Naive thymus-derived CD8-positive, alpha-beta T cell (primary cell): ENCODE measurements at regions of chr19 and their contacts with region 1.

Region 1: GRCh38 chr19:2475702-2476450 is at the start of gene GADD45B:
- DNase-seq: peak; percentile 92 to 99 (median 98)
- ATAC-seq: peak; percentile 53 to 62
- H3K4me3 Mint-ChIP-seq: peak within 1 kb of the TSS; percentile 95 to 100 (median 98)
- H3K27ac Mint-ChIP-seq: peak within 1 kb of the TSS; percentile 94 to 99 (median 94)
- H3K4me1 Mint-ChIP-seq: peaks cover 9 to 36% (median 27%) of the 10 kb centered on the region in 4 donors
- H3K27me3 Mint-ChIP-seq: peaks cover 0 to 5% (median 0%) of the 10 kb centered on the region in 5 donors
- polyA plus RNA-seq, gene GADD45B: 41.0 to 57.3 (median 43.8) TPM

Region 2: GRCh38 chr19:2261438-2262172 is 214.3 kb before region 1 on chr19:
- POLR2A ChIA-PET with region 1: interaction called, 10 read pairs
- DNase-seq: peak in 3 of 10 donors; percentile 41 to 52 (median 47)
- ATAC-seq: no peak
- H3K4me3 Mint-ChIP-seq: peak overlapping the region in 1 of 10 donors; percentile 57
- H3K27ac Mint-ChIP-seq: peak overlapping the region in 6 of 10 donors; percentile 16 to 85 (median 65)
- H3K4me1 Mint-ChIP-seq: peaks cover 3 to 51% (median 23%) of the 10 kb centered on the region in 4 donors
- H3K27me3 Mint-ChIP-seq: no peaks in the 10 kb centered on the region

Region 3: DNA sequence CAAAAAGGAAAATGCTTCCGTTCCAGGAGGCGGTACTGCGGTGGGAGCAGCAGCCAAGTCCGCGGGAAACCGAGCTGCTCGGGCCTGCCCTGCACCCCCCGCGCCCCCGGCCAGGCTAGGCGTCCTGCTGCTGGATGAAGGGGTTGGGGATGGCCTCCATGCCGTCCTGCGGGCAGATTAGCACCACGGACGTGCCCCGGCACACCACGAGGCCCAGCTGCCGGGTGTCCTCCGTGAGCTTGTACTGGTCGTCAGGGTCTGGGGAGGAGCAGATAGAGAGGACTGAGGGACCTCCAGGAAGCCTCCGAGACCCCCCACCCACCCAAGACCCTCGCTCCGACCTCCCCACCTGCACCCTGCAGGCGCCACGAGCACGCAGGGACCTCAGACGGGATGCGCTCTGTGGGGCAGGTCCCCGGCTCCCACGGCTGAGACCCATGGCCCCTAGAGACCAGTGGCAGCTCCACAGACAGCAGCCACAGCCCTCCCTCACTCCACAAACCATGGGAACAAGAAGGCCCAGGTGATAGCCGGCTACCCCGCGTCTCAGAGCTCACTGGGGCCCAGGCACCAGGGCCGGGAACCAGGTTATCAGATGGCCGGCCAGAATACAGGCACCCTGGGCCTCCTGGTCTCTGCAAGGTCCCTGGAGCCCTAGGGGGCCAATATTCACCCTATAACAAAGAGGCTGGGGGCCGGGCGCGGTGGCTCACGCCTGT is 154.2 kb before region 1 on chr19:
- POLR2A ChIA-PET with region 1: no interaction called
- DNase-seq: no peak
- ATAC-seq: no peak
- H3K4me3 Mint-ChIP-seq: no peak overlapping the region
- H3K27ac Mint-ChIP-seq: no peak overlapping the region
- H3K4me1 Mint-ChIP-seq: peaks cover 6 to 35% (median 18%) of the 10 kb centered on the region in 4 donors
- H3K27me3 Mint-ChIP-seq: peaks cover 0 to 3% (median 0%) of the 10 kb centered on the region in 5 donors

Region 4: DNA sequence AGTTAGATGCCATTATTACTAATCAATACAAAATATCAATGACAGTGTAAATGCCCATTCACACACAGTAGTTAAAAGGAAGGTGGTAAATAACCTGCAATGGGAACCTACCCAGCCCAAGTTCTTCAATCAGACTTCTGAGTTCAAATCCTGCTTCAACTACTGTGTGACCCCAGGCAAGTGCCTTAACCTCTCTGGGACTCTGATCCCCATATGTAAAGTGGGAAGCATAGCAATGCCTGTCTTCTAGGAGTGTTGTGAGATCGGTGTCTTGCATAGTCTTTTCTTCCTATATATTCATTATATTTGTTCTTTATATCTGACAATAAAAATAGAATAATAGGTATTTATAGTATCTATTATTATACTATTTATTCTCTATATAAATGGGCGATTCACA is 55.4 kb before region 1 on chr19:
- POLR2A ChIA-PET with region 1: no interaction called
- DNase-seq: no peak
- ATAC-seq: no peak
- H3K4me3 Mint-ChIP-seq: no peak overlapping the region
- H3K27ac Mint-ChIP-seq: no peak overlapping the region
- H3K4me1 Mint-ChIP-seq: peaks cover 0 to 2% (median 0%) of the 10 kb centered on the region in 4 donors
- H3K27me3 Mint-ChIP-seq: no peaks in the 10 kb centered on the region

Region 5: DNA sequence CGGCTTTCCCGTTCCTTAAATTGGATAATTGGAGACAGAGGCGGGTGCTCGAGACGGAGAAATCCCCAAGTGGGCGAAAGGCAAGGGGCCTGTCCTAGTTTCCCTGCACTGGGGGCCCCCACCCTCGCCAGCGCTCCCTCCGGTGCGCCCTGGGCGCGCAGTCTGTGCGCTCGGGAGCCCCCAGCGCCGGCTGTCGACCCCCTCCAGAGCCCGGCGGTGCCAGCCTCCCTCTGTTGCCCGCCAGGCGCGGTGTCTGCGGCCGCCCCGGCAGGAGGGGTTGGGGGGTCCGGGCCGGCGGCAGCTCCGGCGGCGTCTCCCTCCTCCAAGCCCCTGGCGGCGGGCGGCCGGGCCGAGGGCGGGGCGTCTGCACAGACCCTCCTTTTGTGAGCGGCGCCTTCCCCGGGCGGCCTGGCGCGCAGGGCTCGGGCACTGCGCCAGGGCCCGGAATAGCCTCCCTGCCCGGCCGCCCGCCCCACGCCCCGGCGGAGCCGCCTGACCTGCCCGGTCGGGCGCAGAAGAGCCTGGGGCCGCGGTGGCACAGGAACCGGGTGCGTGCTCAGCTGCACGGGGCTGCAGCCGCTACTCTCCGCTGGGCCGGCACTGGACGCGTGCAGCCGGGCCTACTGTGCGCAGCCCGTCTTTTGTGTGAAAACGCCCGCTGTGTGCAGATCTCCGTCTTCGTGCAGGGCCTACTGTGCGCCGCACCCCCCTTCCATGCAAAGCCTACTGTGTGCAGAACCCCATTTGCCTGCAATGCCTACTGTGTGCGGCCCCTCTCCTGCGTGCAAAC is 13.3 kb after region 1 on chr19:
- POLR2A ChIA-PET with region 1: interaction called, 112 read pairs
- DNase-seq: no peak
- ATAC-seq: peak; percentile 55 to 61
- H3K4me3 Mint-ChIP-seq: peak overlapping the region; percentile 55 to 82 (median 69)
- H3K27ac Mint-ChIP-seq: peak overlapping the region in 2 of 10 donors; percentile 70 to 77
- H3K4me1 Mint-ChIP-seq: peaks cover 12 to 45% (median 30%) of the 10 kb centered on the region in 4 donors
- H3K27me3 Mint-ChIP-seq: peaks cover 3 to 46% (median 19%) of the 10 kb centered on the region in 5 donors

Region 6: GRCh38 chr19:2517868-2518625 is 42.2 kb after region 1 on chr19:
- POLR2A ChIA-PET with region 1: interaction called, 36 read pairs
- DNase-seq: peak in 5 of 10 donors; percentile 8 to 76 (median 26)
- ATAC-seq: peak; percentile 79 to 88
- H3K4me3 Mint-ChIP-seq: peak overlapping the region in 7 of 10 donors; percentile 29 to 66 (median 50)
- H3K27ac Mint-ChIP-seq: peak overlapping the region in 5 of 10 donors; percentile 34 to 73 (median 44)
- H3K4me1 Mint-ChIP-seq: peaks cover 0 to 9% (median 6%) of the 10 kb centered on the region in 4 donors
- H3K27me3 Mint-ChIP-seq: peaks cover 0 to 1% (median 0%) of the 10 kb centered on the region in 5 donors

Region 7: DNA sequence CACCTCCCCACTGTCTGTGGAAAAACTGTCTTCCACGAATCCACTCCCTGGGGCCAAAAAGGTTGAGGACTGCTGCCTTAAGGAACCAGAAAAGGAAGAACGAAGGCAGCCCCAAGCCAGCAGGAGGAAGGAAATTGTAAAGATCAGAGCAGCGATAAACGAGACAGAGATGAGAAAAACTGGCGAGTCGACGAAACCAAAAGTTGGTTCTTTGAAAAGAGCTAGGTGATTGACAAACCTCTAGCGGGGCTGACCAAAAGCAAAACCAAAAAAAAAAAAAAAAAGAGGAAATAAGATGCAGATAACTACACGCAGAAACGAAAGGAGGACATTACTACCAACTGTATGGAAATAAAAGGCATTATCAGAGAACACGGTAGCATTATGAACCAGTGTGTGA is 77.0 kb after region 1 on chr19:
- POLR2A ChIA-PET with region 1: interaction called, 92 read pairs
- DNase-seq: peak in 9 of 10 donors; percentile 29 to 75 (median 55)
- ATAC-seq: peak; percentile 91 to 97
- H3K4me3 Mint-ChIP-seq: peak overlapping the region; percentile 77 to 90 (median 88)
- H3K27ac Mint-ChIP-seq: peak overlapping the region; percentile 18 to 89 (median 78)
- H3K4me1 Mint-ChIP-seq: peaks cover 12 to 29% (median 21%) of the 10 kb centered on the region in 4 donors
- H3K27me3 Mint-ChIP-seq: no peaks in the 10 kb centered on the region

Region 8: DNA sequence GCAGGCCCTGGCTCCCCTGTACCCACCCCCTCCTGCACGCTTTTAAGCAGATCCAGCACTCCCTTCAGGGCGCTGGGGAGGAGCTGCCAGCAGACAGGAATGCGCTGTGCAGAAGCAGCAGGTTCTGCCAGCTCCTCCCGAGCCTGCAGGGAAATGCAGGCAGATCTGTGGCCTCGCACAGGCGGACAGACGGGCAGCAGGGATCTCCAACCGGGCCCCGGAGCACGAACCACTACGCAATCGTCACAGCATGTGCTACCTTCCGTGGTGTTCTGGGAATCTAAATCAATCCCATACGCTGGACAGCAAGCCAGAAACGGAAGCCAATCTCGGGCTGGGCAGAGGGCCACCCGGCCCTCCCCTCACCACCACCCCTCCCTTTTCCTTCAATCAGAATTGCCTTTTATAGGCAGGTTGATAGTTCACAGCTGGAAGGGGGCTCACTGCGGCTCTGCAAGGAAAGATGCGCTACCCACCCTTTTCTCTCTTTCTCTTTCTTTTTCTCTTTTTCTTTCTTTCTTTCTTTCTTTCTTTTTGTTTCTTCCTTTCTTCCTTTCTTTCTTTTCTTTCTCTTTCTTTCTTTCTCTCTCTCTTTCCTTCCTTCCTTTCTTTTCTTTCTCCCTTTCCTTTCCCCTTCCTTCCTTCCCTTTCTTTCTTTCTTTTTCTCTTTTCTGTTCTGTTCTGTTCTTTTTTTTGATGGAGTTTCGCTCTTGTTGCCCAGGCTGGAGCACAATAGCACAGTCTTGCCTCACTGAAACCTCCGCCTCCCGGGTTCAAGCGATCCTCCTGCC is 126.7 kb after region 1 on chr19:
- POLR2A ChIA-PET with region 1: interaction called, 79 read pairs
- DNase-seq: no peak
- ATAC-seq: no peak
- H3K4me3 Mint-ChIP-seq: no peak overlapping the region
- H3K27ac Mint-ChIP-seq: peak overlapping the region in 4 of 10 donors; percentile 18 to 63 (median 48)
- H3K4me1 Mint-ChIP-seq: peaks cover 6 to 22% (median 16%) of the 10 kb centered on the region in 4 donors
- H3K27me3 Mint-ChIP-seq: no peaks in the 10 kb centered on the region

Region 9: DNA sequence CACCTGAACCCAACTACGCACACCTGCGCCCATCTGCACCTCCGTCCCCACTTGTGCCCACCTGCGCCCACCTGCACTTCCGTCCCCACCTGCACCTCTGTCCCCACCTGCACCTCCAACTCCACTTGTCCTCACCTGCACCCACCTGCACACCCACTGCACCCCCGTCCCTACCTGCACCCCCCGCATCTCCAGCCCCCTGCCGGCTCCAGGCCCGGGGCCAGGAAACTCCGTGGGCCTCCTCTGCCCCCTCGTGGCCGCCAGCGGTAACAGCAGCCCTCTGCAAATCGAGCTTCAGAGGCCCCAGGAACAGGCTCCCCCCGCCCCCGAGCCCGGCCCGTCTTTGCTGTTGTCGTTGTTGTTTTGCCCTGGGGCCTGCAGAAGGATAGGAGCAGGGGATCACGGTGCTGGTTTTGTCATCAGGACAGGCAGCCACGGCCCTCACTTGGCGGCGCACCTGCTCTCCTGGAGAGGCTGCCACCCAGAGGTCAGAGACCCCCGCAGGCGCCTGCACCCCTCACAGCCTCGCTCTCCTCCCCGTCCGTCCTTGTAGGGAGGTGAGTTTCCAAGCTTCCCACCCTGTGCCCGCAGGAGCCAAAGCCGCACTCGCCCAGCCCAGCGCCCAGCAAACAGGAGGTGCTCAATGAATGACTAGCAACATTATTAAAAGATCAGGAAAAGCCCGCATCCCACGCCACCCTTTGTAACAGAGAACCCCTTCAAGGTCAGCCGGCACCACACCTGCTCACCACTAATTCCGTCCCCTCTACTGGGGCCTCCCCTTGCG is 161.2 kb after region 1 on chr19:
- POLR2A ChIA-PET with region 1: interaction called, 72 read pairs
- DNase-seq: peak; percentile 65 to 89 (median 79)
- ATAC-seq: peak; percentile 94
- H3K4me3 Mint-ChIP-seq: peak overlapping the region in 7 of 10 donors; percentile 14 to 56 (median 33)
- H3K27ac Mint-ChIP-seq: peak overlapping the region in 4 of 10 donors; percentile 7 to 76 (median 71)
- H3K4me1 Mint-ChIP-seq: peaks cover 5 to 26% (median 21%) of the 10 kb centered on the region in 4 donors
- H3K27me3 Mint-ChIP-seq: no peaks in the 10 kb centered on the region